ENCODE measurements at regions of chr11 and their contacts with region 1.

Region 1: DNA sequence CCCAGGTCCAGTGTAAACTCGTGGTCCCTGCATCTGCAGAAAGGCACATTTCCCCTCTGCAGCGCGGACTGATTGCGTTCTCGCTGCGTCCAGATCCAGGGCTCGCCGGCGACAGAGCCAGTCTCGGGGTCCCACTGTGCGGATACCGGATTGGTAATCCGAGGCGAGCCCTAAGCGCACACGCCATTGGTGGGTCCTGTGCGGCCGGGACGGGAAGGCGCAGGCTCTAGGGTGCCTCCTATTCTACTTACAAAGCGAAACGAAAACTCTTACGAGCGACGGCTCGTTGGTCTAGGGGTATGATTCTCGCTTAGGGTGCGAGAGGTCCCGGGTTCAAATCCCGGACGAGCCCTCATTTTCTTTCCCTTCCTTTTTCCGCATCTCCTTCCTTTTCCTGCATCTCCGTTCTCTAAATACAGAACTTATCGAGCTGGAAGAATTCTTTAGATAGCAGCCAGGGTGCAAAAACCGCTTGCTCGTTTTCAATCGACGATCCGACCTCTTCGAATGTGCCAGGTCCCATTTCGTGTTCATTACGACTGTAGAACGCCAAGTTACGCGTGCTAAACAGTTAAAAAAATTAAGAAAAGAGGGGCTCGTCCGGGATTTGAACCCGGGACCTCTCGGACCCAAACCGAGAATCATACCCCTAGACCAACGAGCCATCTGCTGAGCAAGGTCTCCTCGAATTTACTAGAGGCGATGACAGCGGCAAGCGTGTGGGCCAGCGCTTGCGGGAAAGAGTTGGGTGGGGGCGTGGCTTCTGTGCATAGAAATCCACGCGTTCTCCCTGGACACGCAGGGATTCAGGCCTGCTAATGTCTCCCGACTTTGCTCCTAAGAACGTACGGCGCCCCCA is 29.2 kb upstream of the WNT11 start:
- DNase-seq: peak; percentile 79 to 95 (median 92)
- ATAC-seq: peak; percentile 87
- H3K4me3 ChIP-seq: peak overlapping the region; percentile 98
- H3K4me3 Mint-ChIP-seq: peak overlapping the region; percentile 82 to 94 (median 91)
- H3K27ac ChIP-seq: peak overlapping the region; percentile 57
- H3K27ac Mint-ChIP-seq: peak overlapping the region; percentile 89 to 99 (median 96)
- H3K4me1 ChIP-seq: peaks cover 26 to 40% of the 10 kb centered on the region in 2 donors
- H3K4me1 Mint-ChIP-seq: peaks cover 16 to 65% (median 55%) of the 10 kb centered on the region in 7 donors
- H3K27me3 ChIP-seq: no peaks in the 10 kb centered on the region
- H3K27me3 Mint-ChIP-seq: peaks cover 0 to 30% (median 0%) of the 10 kb centered on the region in 5 donors

Region 2: GRCh38 chr11:75734491-75735180 is 500.8 kb before region 1 on chr11:
- CTCF ChIA-PET with region 1: no interaction called
- POLR2A ChIA-PET with region 1: no interaction called
- intact Hi-C with region 1: no loop called
- DNase-seq: no peak
- ATAC-seq: no peak
- H3K4me3 ChIP-seq: no peak overlapping the region
- H3K4me3 Mint-ChIP-seq: no peak overlapping the region
- H3K27ac ChIP-seq: no peak overlapping the region
- H3K27ac Mint-ChIP-seq: no peak overlapping the region
- H3K4me1 ChIP-seq: no peaks in the 10 kb centered on the region
- H3K4me1 Mint-ChIP-seq: no peaks in the 10 kb centered on the region
- H3K27me3 ChIP-seq: no peaks in the 10 kb centered on the region
- H3K27me3 Mint-ChIP-seq: peaks cover 4 to 20% (median 9%) of the 10 kb centered on the region in 5 donors

Region 3: GRCh38 chr11:76083563-76084451 is 151.7 kb before region 1 on chr11:
- CTCF ChIA-PET with region 1: no interaction called
- POLR2A ChIA-PET with region 1: no interaction called
- intact Hi-C with region 1: no loop called
- DNase-seq: no peak
- ATAC-seq: no peak
- H3K4me3 ChIP-seq: no peak overlapping the region
- H3K4me3 Mint-ChIP-seq: no peak overlapping the region
- H3K27ac ChIP-seq: no peak overlapping the region
- H3K27ac Mint-ChIP-seq: no peak overlapping the region
- H3K4me1 ChIP-seq: no peaks in the 10 kb centered on the region
- H3K4me1 Mint-ChIP-seq: peaks cover 0 to 5% (median 0%) of the 10 kb centered on the region in 7 donors
- H3K27me3 ChIP-seq: no peaks in the 10 kb centered on the region
- H3K27me3 Mint-ChIP-seq: no peaks in the 10 kb centered on the region

Region 4: DNA sequence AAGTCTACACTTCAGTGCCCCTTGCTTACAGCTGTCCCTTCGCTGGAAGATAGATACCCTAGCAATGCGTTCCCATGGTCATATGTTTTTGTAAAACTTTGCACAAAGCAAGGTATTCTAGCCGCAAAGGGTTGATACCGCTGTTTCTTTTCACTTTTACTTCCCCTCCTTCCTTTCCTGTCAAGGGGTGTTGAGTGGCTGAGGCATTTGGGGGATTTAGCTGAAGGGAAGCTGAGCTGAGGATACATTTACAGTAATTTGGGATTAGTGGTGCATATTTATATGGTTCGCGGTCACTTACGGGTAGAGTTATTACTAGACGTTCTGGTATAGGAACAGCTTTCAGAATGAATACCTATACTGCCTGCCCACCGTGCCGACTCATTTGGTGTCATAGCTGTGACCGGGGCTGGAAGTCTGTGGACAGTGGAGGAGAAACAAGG is 57.7 kb after region 1 on chr11:
- CTCF ChIA-PET with region 1: interaction called, 3 read pairs
- POLR2A ChIA-PET with region 1: interaction called, 12 read pairs
- intact Hi-C with region 1: loop called (anchors 1 to 2 kb)
- DNase-seq: no peak
- ATAC-seq: no peak
- H3K4me3 ChIP-seq: no peak overlapping the region
- H3K4me3 Mint-ChIP-seq: peak overlapping the region in 9 of 10 donors; percentile 4 to 77 (median 36)
- H3K27ac ChIP-seq: no peak overlapping the region
- H3K27ac Mint-ChIP-seq: peak overlapping the region in 7 of 9 donors; percentile 36 to 96 (median 73)
- H3K4me1 ChIP-seq: peaks cover 0 to 12% of the 10 kb centered on the region in 2 donors
- H3K4me1 Mint-ChIP-seq: peaks cover 12 to 37% (median 28%) of the 10 kb centered on the region in 7 donors
- H3K27me3 ChIP-seq: no peaks in the 10 kb centered on the region
- H3K27me3 Mint-ChIP-seq: peaks cover 0 to 2% (median 0%) of the 10 kb centered on the region in 5 donors

Region 5: DNA sequence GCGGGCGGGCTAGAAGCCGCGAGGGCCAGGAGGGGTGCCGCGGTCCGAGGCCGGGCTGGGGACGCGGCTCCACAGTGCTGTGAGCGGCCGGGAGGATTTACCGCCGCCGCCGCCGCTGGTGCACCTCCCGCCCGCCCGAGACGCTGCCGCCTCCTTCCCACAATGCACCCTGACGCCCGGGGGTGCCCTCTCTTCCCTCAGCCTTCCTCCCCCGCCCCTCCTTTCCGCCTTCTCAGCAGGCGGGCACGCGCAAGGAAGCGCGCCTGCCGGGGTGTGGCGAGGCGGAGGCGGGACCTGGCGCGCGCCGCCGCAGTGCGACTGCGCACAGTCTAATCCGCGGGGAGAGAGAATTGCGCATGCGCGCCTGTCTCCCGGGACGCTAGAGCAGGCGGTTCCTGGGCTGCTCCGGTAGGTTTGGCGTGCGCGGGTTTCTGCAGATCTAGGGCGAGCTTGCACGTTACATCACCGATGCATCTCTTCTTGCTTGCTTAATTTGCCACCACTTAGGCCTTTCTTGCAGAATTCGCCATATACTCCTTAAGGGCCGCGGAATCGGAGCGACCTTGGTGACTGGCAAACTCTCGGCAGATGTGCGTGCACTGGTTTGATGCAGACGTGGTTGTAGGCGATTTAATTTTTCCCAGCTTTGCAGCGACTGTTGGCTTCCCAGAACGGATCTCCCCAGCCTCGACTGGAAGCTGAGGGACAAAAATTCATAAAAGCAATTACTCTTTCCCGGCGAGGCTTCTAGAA is 145.7 kb after region 1 on chr11 and contains the starts of genes GVQW3 and THAP12:
- CTCF ChIA-PET with region 1: no interaction called
- POLR2A ChIA-PET with region 1: no interaction called
- intact Hi-C with region 1: loop called (anchors 1 kb)
- DNase-seq: peak; percentile 96 to 99 (median 98)
- ATAC-seq: peak; percentile 96
- H3K4me3 ChIP-seq: peak within 1 kb of the TSS; percentile 86
- H3K4me3 Mint-ChIP-seq: peak within 1 kb of the TSS; percentile 92 to 98 (median 97)
- H3K27ac ChIP-seq: peak within 1 kb of the TSS; percentile 72
- H3K27ac Mint-ChIP-seq: peak within 1 kb of the TSS; percentile 75 to 98 (median 92)
- H3K4me1 ChIP-seq: peaks cover 22 to 43% of the 10 kb centered on the region in 2 donors
- H3K4me1 Mint-ChIP-seq: peaks cover 51 to 76% (median 69%) of the 10 kb centered on the region in 7 donors
- H3K27me3 ChIP-seq: no peaks in the 10 kb centered on the region
- H3K27me3 Mint-ChIP-seq: no peaks in the 10 kb centered on the region
- total RNA-seq, gene GVQW3: 3.6 to 9.1 (median 6.7) TPM
- total RNA-seq, gene THAP12: 40.3 to 57.9 (median 51.1) TPM

Measured in naive thymus-derived CD4-positive, alpha-beta T cell (primary cell).